Activated CD4-positive, alpha-beta T cell treated with anti-CD3 and anti-CD28 coated beads for 36 hours (primary cell): ENCODE measurements at regions of chr6 and their contacts with region 1.

Region 1: DNA sequence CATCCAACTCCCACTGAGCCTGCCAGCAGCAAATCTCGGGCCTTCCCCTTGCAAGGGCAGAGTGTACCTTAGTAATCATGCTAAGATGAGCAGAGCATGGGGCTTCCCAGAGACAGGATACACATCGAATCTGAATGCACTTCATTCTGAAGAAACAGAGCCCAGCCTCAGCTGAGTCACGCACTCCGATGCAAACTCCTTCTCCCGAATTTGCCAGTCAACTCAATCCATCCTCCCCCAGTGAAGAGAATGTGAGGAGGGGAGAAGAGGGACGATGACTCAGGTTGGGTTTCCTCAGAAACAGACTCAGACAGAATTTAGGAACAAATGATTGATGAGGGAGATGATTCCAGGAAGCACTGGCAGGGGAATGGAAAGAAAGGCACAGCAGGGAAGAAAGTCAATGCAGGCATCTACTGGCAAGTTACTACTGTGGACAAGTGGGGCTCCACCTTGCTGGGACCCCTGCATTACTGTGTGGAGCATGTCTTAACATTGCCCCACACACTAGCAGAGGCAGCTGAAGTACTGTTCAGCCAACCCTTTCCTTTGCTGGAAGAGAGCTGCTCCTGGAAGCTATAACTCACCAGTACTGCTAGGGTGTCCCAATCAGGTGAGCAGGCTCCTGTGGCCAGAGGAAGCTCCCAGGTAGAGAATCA is 251.6 kb downstream of the ADGB start:
- DNase-seq: peak; percentile 70
- ATAC-seq: peak; percentile 75
- H3K4me3 Mint-ChIP-seq: no peak overlapping the region
- H3K27ac Mint-ChIP-seq: peak overlapping the region; percentile 80
- H3K4me1 Mint-ChIP-seq: peaks cover 38% of the 10 kb centered on the region
- H3K27me3 Mint-ChIP-seq: peaks cover 4% of the 10 kb centered on the region

Region 2: GRCh38 chr6:145823328-145823944 is 1026.9 kb before region 1 on chr6:
- CTCF ChIA-PET with region 1: no interaction called
- POLR2A ChIA-PET with region 1: no interaction called
- intact Hi-C with region 1: loop called in 1 of 2 experiments (anchors 5 kb)
- DNase-seq: no peak
- ATAC-seq: peak; percentile 94
- H3K4me3 Mint-ChIP-seq: no peak overlapping the region
- H3K27ac Mint-ChIP-seq: no peak overlapping the region
- H3K4me1 Mint-ChIP-seq: peaks cover 33% of the 10 kb centered on the region
- H3K27me3 Mint-ChIP-seq: no peaks in the 10 kb centered on the region

Region 3: DNA sequence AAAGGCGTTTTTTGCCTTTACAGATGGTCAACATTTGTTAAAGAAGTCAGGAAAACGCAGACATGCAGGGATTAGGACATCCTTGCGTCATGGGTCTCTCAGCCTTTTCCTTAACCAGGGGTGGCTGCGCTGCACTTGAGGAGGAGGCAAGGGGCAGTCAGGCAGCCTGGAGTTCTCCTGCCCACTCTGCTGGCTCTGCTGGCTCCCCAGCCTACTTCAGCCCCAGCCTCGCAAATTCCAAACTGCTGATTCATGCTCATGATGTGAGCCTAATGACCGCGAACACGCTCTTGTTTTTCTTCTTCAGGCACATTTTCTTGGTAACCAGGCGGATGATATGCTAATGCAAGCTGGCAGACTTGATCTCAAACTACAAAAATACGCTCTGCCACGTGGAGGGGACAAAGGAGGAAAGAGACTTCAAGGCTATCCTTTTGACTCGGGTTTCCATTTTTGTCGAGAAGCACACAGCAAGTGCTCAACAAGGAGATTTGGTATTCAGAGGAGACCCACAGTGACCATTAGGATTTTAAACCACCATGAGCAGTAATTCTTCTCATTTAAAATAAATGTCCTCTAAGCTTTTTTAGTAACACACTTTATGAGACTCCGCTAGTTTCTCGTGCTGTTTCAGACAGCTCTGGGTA is 63.6 kb after region 1 on chr6:
- CTCF ChIA-PET with region 1: no interaction called
- POLR2A ChIA-PET with region 1: no interaction called
- intact Hi-C with region 1: loop called in 1 of 2 experiments (anchors 2 kb)
- DNase-seq: peak; percentile 41
- ATAC-seq: peak; percentile 51
- H3K4me3 Mint-ChIP-seq: no peak overlapping the region
- H3K27ac Mint-ChIP-seq: no peak overlapping the region
- H3K4me1 Mint-ChIP-seq: peaks cover 21% of the 10 kb centered on the region
- H3K27me3 Mint-ChIP-seq: peaks cover 5% of the 10 kb centered on the region

Region 4: GRCh38 chr6:146950351-146950835 is 100.0 kb after region 1 on chr6:
- CTCF ChIA-PET with region 1: no interaction called
- POLR2A ChIA-PET with region 1: no interaction called
- intact Hi-C with region 1: loop called in 1 of 2 experiments (anchors 1 kb)
- DNase-seq: peak; percentile 18
- ATAC-seq: peak; percentile 95
- H3K4me3 Mint-ChIP-seq: no peak overlapping the region
- H3K27ac Mint-ChIP-seq: peak overlapping the region; percentile 55
- H3K4me1 Mint-ChIP-seq: peaks cover 15% of the 10 kb centered on the region
- H3K27me3 Mint-ChIP-seq: no peaks in the 10 kb centered on the region

Region 5: GRCh38 chr6:147268254-147268653 is 417.9 kb after region 1 on chr6:
- CTCF ChIA-PET with region 1: no interaction called
- POLR2A ChIA-PET with region 1: no interaction called
- intact Hi-C with region 1: loop called in 1 of 2 experiments (anchors 5 kb)
- DNase-seq: no peak
- ATAC-seq: peak; percentile 92
- H3K4me3 Mint-ChIP-seq: no peak overlapping the region
- H3K27ac Mint-ChIP-seq: peak overlapping the region; percentile 79
- H3K4me1 Mint-ChIP-seq: peaks cover 17% of the 10 kb centered on the region
- H3K27me3 Mint-ChIP-seq: no peaks in the 10 kb centered on the region

Region 6: DNA sequence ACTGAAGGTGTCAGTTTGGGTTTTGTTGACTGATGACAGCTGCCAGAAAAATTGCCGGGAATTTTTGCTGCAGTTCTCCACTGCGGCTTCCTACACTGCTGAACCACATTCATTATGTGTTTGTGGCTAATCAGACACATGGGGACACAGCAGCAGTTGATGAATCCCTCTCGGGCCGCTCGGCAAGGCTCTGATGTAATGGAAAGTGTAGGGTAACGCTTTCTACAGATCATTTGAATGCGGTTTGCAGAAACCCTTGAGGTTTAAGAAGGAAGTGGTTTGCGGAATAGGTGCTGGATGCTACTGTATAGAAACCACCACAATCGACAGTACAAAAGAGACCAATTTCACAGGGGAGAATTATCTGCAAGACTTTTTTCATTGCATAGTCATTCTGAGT is 1353.6 kb after region 1 on chr6:
- CTCF ChIA-PET with region 1: no interaction called
- POLR2A ChIA-PET with region 1: no interaction called
- intact Hi-C with region 1: loop called in 1 of 2 experiments (anchors 5 kb)
- DNase-seq: peak; percentile 85
- ATAC-seq: peak; percentile 88
- H3K4me3 Mint-ChIP-seq: peak overlapping the region; percentile 66
- H3K27ac Mint-ChIP-seq: peak overlapping the region; percentile 59
- H3K4me1 Mint-ChIP-seq: peaks cover 38% of the 10 kb centered on the region
- H3K27me3 Mint-ChIP-seq: peaks cover 75% of the 10 kb centered on the region

Region 7: GRCh38 chr6:148440877-148441453 is 1590.6 kb after region 1 on chr6:
- CTCF ChIA-PET with region 1: no interaction called
- POLR2A ChIA-PET with region 1: no interaction called
- intact Hi-C with region 1: loop called in 1 of 2 experiments (anchors 5 kb)
- DNase-seq: no peak
- ATAC-seq: no peak
- H3K4me3 Mint-ChIP-seq: no peak overlapping the region
- H3K27ac Mint-ChIP-seq: no peak overlapping the region
- H3K4me1 Mint-ChIP-seq: peaks cover 15% of the 10 kb centered on the region
- H3K27me3 Mint-ChIP-seq: peaks cover 18% of the 10 kb centered on the region